Activated T-helper 1 cell treated with anti-CD3 and anti-CD28 coated beads, Interleukin-12 subunit alpha, Interleukin-12 subunit beta, Interleukin-2, Interleukin-4 antibody, amounts not matched to agents 30 ng/mL and 10 ng/mL and 1 ng/mL, durations not matched to agents 14 hours and 24 hours and 36 hours (primary cell): ENCODE measurements at regions of chr19 and their contacts with region 1.

Region 1: GRCh38 chr19:32674959-32675719 is at the start of gene ANKRD27:
- DNase-seq: peak; percentile 98
- H3K4me3 Mint-ChIP-seq: peak within 1 kb of the TSS; percentile 89
- H3K27ac Mint-ChIP-seq: peak within 1 kb of the TSS; percentile 89
- H3K4me1 Mint-ChIP-seq: peaks cover 28% of the 10 kb centered on the region
- H3K27me3 Mint-ChIP-seq: peaks cover 31% of the 10 kb centered on the region
- total RNA-seq, gene ANKRD27: 28.2 and 28.7 TPM in 2 replicates

Region 2: DNA sequence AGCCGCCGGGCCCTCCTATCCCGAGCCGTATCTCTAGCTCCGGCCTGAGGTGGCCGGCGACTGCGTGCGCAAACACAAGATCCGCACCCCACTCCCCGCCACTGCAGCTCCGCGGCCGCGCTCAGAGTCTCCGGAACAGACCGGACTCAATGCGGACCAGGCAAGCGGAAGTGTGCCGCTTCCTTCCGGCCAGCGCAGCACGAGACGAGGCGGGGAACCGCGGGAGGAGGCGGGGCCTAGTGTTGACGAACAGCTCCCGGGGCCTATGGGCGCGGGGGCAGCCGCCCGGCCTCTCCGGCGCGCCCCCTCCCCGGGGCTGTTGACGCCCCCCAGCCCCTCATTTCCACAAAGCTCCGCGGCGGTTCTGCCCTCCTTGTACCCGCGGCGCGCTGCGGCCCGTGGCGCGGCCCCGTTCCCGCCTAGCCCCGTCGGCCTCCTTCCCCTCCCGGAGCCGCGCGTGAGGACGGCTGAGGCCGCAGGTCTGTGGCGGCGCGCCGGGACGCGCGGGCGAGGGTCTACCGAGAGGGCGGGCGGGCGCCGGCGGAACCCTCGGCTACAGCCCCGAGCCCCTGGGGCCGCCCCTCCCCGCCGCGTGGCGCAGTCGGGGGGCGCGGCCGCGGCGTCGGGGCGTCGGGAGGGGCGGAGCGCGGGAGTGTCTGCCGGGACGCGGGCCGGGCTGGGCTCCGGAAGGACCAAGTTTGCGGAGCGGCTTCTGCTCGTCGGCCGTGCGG is 269.5 kb before region 1 on chr19 and contains the start of gene DPY19L3:
- intact Hi-C with region 1: loop called (anchors 2 kb)
- DNase-seq: peak; percentile 89
- H3K4me3 Mint-ChIP-seq: peak within 1 kb of the TSS; percentile 90
- H3K27ac Mint-ChIP-seq: peak within 1 kb of the TSS; percentile 88
- H3K4me1 Mint-ChIP-seq: peaks cover 17% of the 10 kb centered on the region
- H3K27me3 Mint-ChIP-seq: peaks cover 5% of the 10 kb centered on the region
- total RNA-seq, gene DPY19L3: 11.9 and 16.5 TPM in 2 replicates

Region 3: DNA sequence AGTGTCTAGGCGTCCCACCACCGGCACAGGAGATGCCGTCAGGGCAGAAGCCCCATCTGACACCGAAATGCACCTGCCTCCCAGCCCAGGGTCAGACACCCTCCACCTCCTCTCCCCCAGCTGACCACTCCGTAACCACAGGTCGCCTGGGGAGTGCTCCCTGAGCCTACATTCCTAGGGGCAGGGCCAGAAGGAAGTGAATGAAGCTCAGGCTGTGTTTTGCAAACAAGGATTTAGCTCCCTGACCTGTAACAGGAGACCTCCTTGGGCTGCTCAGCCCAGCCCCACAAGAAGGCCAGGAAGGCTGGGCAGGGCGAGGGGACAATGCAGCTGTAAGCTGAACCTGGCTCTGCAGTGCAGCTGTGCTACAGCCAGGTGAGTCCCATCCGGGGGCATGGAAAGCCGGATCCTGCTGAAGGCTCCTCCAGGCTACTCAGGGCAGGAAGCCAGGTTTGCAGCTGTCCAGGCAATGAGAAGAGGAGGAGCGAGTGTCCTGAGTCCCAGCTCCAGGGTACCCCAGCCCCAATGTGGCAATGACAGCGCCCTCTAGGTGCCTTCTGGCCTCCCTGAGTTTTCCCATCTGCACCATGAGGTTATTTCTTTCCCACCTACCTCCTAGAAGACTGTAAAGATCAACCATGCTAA is 347.5 kb after region 1 on chr19:
- intact Hi-C with region 1: no loop called
- DNase-seq: no peak
- H3K4me3 Mint-ChIP-seq: no peak overlapping the region
- H3K27ac Mint-ChIP-seq: no peak overlapping the region
- H3K4me1 Mint-ChIP-seq: no peaks in the 10 kb centered on the region
- H3K27me3 Mint-ChIP-seq: no peaks in the 10 kb centered on the region

Region 4: DNA sequence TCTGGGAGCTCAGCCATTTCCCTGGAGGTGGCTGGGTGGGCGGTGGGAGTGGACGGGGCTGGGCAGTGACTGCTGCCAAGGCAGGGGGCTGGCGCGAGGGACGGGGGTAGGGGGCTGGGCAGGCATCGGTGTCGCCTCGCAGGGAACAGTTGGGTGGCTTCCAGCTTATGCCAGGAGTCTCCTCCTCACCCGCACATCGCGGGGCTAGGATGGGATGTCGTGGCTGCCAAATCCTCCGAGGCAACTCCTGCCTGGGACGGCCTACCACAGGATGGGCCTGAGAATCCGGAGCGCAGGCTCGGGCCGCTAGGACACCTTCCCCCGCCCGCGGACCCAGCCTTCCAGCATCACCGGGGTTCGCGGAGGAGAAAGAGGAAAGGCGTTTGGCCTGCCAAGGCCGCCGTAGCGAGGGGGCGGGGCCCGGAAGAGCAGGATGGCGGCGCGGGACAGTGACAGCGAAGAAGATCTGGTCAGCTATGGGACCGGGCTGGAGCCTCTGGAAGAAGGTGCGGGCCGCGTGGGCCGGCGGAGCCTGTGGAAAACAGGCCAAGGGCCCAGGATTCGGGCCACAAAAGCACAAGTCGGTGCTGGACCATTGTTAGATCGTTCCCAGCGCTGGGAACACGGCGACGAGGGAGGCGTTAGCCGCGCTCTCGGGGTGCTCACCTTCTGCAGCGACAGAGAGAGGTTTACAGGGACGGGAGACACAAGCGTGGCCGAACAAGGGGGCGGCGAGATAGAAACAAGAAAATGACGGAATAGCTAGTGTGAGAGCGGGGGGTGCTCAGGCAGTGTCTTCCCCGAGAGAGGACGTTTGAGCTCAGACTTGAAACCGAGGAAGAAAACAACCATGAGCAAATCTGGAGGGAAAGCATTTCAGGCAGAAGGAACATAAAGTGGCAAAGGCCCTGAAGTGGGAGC is 405.9 kb after region 1 on chr19 and contains the start of gene GPATCH1:
- intact Hi-C with region 1: loop called (anchors 2 kb)
- DNase-seq: peak; percentile 85
- H3K4me3 Mint-ChIP-seq: peak within 1 kb of the TSS; percentile 98
- H3K27ac Mint-ChIP-seq: peak within 1 kb of the TSS; percentile 90
- H3K4me1 Mint-ChIP-seq: peaks cover 31% of the 10 kb centered on the region
- H3K27me3 Mint-ChIP-seq: no peaks in the 10 kb centered on the region
- total RNA-seq, gene GPATCH1: 11.1 and 13.5 TPM in 2 replicates